Dendritic cell treated with granulocyte-macrophage colony-stimulating factor and Interleukin-4, amounts not matched to agents 40 ng/mL and 50 ng/mL, for 4 days (primary cell): ENCODE measurements at regions of chr21 and their contacts with region 1.

Region 1: GRCh38 chr21:38733973-38734546 is 71.7 kb upstream of the ETS2 start:
- H3K4me3 Mint-ChIP-seq: peak overlapping the region; percentile 79
- H3K27ac Mint-ChIP-seq: peak overlapping the region; percentile 90
- H3K4me1 Mint-ChIP-seq: peaks cover 34% of the 10 kb centered on the region
- H3K27me3 Mint-ChIP-seq: peaks cover 24% of the 10 kb centered on the region

Region 2: DNA sequence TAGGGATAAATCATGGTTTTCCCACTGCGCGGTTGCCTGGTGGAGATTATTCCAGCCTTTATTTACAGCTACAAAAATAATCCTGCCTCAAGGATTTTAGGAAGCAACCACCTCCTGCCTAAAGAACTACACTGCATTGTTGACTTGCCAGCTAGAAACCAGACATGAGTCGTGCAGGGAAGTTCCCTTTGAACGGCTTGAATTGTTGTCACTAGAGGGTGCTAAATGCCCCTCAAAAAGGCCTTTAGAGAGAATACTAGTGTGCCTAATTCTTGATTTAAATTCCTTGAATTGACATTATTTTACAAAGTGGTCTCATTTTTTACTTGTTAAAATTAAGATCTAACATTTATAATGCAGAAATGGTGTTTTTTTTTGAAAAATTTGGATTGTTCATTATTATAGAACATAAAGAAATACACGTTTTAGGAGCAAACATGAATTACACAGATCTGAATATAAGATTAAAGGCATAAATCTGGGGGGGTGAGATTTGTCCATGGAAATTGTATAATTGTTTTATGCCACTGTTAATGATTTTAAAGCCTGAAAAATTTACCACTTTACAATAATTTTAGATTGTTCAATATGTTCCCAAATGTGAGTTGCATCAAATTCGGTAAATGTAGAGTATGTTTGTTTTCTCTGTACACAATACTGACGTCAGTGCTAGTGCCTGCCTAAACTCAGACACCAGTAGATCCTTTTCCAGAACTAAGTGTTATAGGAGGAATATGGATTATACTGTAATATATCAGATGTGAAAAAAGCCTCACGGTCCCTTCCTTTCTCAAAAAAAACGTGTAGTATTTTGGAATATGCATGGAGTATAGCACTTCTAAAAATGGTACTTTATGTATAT is 228.2 kb before region 1 on chr21:
- intact Hi-C with region 1: loop called (anchors 10 kb)
- H3K4me3 Mint-ChIP-seq: no peak overlapping the region
- H3K27ac Mint-ChIP-seq: peak overlapping the region; percentile 79
- H3K4me1 Mint-ChIP-seq: peaks cover 24% of the 10 kb centered on the region
- H3K27me3 Mint-ChIP-seq: peaks cover 2% of the 10 kb centered on the region

Region 3: GRCh38 chr21:38661197-38661871 is 72.7 kb before region 1 on chr21:
- intact Hi-C with region 1: no loop called
- H3K4me3 Mint-ChIP-seq: peak overlapping the region; percentile 82
- H3K27ac Mint-ChIP-seq: peak overlapping the region; percentile 46
- H3K4me1 Mint-ChIP-seq: peaks cover 27% of the 10 kb centered on the region
- H3K27me3 Mint-ChIP-seq: peaks cover 77% of the 10 kb centered on the region

Region 4: GRCh38 chr21:38773099-38774061 is 39.3 kb after region 1 on chr21:
- intact Hi-C with region 1: loop called (anchors 5 kb)
- H3K4me3 Mint-ChIP-seq: peak overlapping the region; percentile 4
- H3K27ac Mint-ChIP-seq: peak overlapping the region; percentile 5
- H3K4me1 Mint-ChIP-seq: peaks cover 51% of the 10 kb centered on the region
- H3K27me3 Mint-ChIP-seq: peaks cover 88% of the 10 kb centered on the region

Region 5: DNA sequence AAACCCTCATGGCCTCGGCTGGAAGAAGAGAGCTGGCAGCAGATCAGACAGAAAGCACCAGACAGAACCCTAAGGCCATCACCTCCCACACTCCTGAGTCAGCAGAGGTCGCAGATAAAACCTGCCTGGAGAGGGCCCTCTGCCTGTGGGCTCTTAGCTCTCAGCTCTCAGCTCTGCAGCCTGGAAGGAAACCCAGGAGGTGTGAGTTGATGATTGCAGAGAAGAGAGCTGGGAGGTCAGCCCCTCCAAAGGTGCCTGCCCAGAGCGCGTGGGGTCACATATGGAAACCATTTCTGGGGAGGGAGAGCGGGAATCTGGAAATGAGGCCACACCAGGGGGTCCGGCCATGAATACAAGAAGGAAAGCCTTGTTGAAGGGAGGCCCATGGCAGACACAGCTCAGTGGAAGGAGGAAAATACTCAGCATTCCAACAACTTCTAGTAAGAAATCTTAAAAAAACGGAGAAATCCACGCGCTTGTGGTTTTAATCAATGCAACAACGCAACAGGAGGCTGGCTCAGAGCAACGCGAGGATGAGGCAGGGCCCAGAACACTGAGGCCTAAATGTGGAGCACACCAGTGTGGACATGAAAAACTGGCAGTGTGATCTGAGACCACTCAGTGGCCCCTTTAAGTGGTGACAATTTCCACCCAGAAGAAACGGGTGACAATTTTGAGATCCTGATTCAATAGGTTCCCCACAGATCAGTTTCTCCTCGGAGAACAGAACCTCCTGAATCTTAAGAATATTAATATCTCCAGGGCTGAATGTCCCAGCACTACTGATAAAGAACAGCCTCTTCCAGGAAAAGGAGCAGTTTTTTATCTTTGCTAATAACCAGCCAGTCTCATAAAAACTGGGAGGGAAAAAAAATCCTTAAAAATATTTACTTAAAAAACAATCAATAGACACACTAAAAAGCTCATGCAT is 403.5 kb after region 1 on chr21:
- intact Hi-C with region 1: loop called (anchors 2 kb)
- H3K4me3 Mint-ChIP-seq: no peak overlapping the region
- H3K27ac Mint-ChIP-seq: no peak overlapping the region
- H3K4me1 Mint-ChIP-seq: peaks cover 5% of the 10 kb centered on the region
- H3K27me3 Mint-ChIP-seq: peaks cover 11% of the 10 kb centered on the region